ENCODE measurements at regions of chr11 and their contacts with region 1.

Region 1: GRCh38 chr11:111586388-111586831 is 15.8 kb upstream of the SIK2 start:
- DNase-seq: peak in 7 of 9 donors; percentile 37 to 65 (median 56)
- ATAC-seq: peak; percentile 83
- H3K4me3 ChIP-seq: no peak overlapping the region
- H3K4me3 Mint-ChIP-seq: no peak overlapping the region
- H3K27ac ChIP-seq: no peak overlapping the region
- H3K27ac Mint-ChIP-seq: no peak overlapping the region
- H3K4me1 ChIP-seq: no peaks in the 10 kb centered on the region
- H3K4me1 Mint-ChIP-seq: peaks cover 0 to 2% (median 0%) of the 10 kb centered on the region in 7 donors
- H3K27me3 ChIP-seq: no peaks in the 10 kb centered on the region
- H3K27me3 Mint-ChIP-seq: peaks cover 0 to 11% (median 3%) of the 10 kb centered on the region in 5 donors

Region 2: DNA sequence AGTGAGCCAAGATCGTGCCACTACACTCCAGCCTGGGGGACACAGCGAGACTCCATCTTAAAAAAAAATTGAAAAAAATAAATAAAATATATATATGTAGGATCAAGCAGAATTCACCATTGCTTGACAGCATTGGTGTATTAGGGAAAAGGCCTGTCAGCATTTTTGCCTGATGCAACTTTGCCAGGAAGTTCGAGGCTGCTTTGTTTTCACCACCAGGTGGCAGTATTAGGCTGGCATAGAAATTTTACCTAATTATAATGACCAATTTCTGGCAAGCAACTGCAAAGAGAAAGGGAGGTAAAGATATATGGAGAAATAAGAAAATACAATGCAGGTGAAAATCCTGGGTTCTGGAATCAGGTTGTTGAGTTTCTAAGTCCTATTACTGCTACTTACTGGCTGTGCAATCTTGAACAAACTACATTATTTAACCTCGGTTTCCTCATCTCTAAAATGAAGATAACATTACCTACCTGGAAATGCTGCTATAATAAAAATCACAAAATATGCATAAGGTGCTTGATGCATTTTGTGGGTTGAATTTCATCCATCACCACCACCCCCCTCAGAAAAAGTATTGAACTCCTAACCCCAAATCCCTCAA is 21.2 kb before region 1 on chr11:
- CTCF ChIA-PET with region 1: interaction called, 4 read pairs
- POLR2A ChIA-PET with region 1: interaction called, 3 read pairs
- intact Hi-C with region 1: loop called in 1 of 2 experiments (anchors 1 kb)
- DNase-seq: peak; percentile 11 to 64 (median 54)
- ATAC-seq: peak; percentile 60
- H3K4me3 ChIP-seq: no peak overlapping the region
- H3K4me3 Mint-ChIP-seq: no peak overlapping the region
- H3K27ac ChIP-seq: no peak overlapping the region
- H3K27ac Mint-ChIP-seq: no peak overlapping the region
- H3K4me1 ChIP-seq: no peaks in the 10 kb centered on the region
- H3K4me1 Mint-ChIP-seq: peaks cover 0 to 1% (median 0%) of the 10 kb centered on the region in 7 donors
- H3K27me3 ChIP-seq: no peaks in the 10 kb centered on the region
- H3K27me3 Mint-ChIP-seq: peaks cover 0 to 3% (median 0%) of the 10 kb centered on the region in 5 donors

Measured in naive thymus-derived CD4-positive, alpha-beta T cell (primary cell).